Heart left ventricle (tissue), 16 donors: ENCODE measurements at regions of chr2 and their contacts with region 1.

Region 1: GRCh38 chr2:37653805-37654378 is 17.6 kb downstream of the CDC42EP3 start:
- DNase-seq: peak; percentile 70 to 89 (median 79)
- ATAC-seq: peak; percentile 74 to 87 (median 79)
- H3K4me3 ChIP-seq: peak overlapping the region in 9 of 12 donors; percentile 1 to 38 (median 19)
- H3K27ac ChIP-seq: peak overlapping the region; percentile 76 to 95 (median 90)
- H3K4me1 ChIP-seq: peaks cover 28 to 98% (median 90%) of the 10 kb centered on the region in 12 donors
- H3K27me3 ChIP-seq: no peaks in the 10 kb centered on the region
- CTCF ChIP-seq: no peak
- POLR2A ChIP-seq: peak in 1 of 2 donors; percentile 34

Region 2: DNA sequence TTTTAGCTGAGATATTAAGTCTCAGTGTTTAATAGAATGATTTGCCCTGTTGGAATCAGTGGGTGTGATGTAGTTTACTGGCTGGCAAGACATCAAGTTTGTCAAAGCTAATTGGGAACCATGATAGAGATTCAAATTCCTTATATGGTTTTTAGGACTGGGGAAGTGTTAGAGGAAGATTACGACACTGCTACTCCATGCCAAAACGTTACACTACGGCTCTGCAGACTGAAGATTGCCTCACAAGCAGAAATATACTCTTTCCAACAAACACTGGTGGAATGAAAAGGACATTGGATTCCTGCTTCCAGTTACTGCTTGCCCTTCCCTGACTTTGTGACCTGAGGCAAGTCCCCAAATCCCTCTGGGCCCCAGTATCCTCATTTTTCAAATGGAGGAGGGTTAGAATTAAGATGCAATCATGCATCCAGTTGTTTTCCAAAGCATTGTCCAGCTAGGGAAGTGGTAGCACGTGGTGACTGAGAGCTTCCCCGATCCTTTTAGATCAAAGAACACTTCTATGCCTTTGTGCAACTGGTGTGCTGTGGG is 130.0 kb before region 1 on chr2:
- intact Hi-C with region 1: loop called in 2 of 10 experiments (anchors 5 to 10 kb)
- DNase-seq: peak in 4 of 5 donors; percentile 43 to 61 (median 51)
- ATAC-seq: peak; percentile 90 to 98 (median 97)
- H3K4me3 ChIP-seq: no peak overlapping the region
- H3K27ac ChIP-seq: peak overlapping the region; percentile 1 to 89 (median 68)
- H3K4me1 ChIP-seq: peaks cover 0 to 33% (median 22%) of the 10 kb centered on the region in 12 donors
- H3K27me3 ChIP-seq: no peaks in the 10 kb centered on the region
- CTCF ChIP-seq: no peak
- POLR2A ChIP-seq: no peak

Region 3: DNA sequence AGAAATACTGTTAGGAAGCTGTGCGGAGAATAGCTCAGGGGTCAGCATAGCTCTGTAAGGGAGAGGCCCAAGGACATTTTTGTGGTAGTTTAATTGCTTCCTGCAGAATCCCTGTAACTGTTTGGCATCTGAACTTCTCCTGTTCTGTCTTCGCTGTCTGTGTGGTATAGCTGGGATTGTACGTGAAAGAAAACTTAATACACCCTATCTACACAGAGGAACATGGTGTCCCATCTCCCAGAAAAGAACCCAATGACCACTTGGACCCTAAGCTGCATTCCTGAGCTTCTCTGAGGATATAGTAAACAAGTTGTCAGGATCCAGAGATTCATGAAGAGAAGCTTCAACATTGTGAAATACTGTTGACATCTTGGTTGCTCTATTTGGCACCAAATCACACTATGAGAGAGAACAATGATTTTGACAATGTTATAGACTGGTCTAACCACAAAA is 63.7 kb before region 1 on chr2:
- intact Hi-C with region 1: loop called in 1 of 10 experiments (anchors 5 kb)
- DNase-seq: no peak
- ATAC-seq: peak in 2 of 4 donors; percentile 32 to 87
- H3K4me3 ChIP-seq: no peak overlapping the region
- H3K27ac ChIP-seq: peak overlapping the region in 2 of 12 donors; percentile 10 to 40
- H3K4me1 ChIP-seq: peaks cover 0 to 53% (median 26%) of the 10 kb centered on the region in 12 donors
- H3K27me3 ChIP-seq: no peaks in the 10 kb centered on the region
- CTCF ChIP-seq: no peak
- POLR2A ChIP-seq: no peak

Region 4: GRCh38 chr2:37871456-37872191 is 217.7 kb after region 1 on chr2:
- intact Hi-C with region 1: loop called in 5 of 10 experiments (anchors 5 to 10 kb)
- DNase-seq: no peak
- ATAC-seq: peak in 3 of 4 donors; percentile 19 to 50 (median 32)
- H3K4me3 ChIP-seq: no peak overlapping the region
- H3K27ac ChIP-seq: peak overlapping the region in 9 of 12 donors; percentile 16 to 84 (median 68)
- H3K4me1 ChIP-seq: peaks cover 0 to 87% (median 52%) of the 10 kb centered on the region in 12 donors
- H3K27me3 ChIP-seq: no peaks in the 10 kb centered on the region
- CTCF ChIP-seq: no peak
- POLR2A ChIP-seq: no peak